GM10248 (cell line): ENCODE measurements at regions of chr3 and their contacts with region 1.

Region 1: GRCh38 chr3:82643948-82644347 is 882.5 kb upstream of the GBE1 start:
- DNase-seq: no peak
- CTCF ChIP-seq: no peak

Region 2: GRCh38 chr3:82627733-82628132 is 16.2 kb before region 1 on chr3:
- CTCF ChIA-PET with region 1: interaction called, 12 read pairs
- POLR2A ChIA-PET with region 1: no interaction called
- DNase-seq: no peak
- CTCF ChIP-seq: no peak

Region 3: DNA sequence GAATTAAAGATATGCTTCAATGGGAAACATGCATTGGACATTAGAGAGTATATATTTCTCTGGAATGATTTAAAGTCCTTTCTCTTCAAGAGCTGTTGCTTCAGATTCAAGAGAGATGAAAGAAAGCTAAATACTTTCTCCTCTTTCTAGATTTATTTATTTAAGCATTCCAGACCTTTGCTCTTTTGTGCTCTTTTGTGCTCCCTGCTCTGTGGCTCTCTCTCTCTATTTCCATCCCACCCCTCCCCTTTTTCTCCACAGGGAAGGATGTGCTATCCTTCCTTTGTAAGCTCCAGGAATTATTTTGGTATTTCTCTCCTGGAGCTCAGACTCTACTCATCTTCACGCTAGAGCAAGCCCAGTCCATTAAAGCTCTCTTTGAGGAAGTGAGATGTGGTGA is 10.6 kb before region 1 on chr3:
- CTCF ChIA-PET with region 1: interaction called, 12 read pairs
- POLR2A ChIA-PET with region 1: no interaction called
- DNase-seq: no peak
- CTCF ChIP-seq: no peak